ENCODE measurements at regions of chr4 and their contacts with region 1.

Region 1: GRCh38 chr4:112765317-112765975 is 128.5 kb downstream of the LARP7 start:
- DNase-seq: peak; percentile 26
- ATAC-seq: peak; percentile 61
- H3K4me3 ChIP-seq: no peak overlapping the region
- H3K27ac ChIP-seq: no peak overlapping the region
- H3K4me1 ChIP-seq: no peaks in the 10 kb centered on the region
- H3K27me3 ChIP-seq: no peaks in the 10 kb centered on the region
- CTCF ChIP-seq: peak; percentile 62

Region 2: DNA sequence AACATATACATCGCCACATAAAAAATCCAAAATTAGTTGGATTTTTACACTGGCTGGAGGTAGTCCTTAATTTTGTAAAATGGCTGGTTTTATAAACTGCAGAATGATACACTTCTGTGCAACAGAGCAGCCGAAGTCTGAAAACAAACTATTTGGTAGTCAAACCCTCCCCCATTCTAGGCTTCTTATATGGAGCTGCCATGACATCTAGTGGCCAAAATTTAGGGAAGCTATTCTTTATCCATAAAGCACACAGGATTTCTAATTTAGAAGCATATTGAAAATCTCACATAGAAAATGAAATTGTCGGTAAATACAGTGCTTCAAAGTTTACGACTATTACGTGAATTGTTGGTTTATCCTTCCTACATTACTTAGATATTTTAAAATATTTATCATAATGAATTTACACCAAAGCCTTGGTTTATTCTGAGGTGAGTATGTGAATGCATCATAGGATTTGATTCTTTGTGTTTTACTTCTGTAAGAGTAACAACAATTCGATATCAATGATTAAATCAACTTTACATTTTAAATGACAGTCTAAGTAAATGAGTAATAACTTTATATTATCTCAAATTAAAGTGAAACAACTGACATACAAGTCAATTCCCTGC is 733.6 kb before region 1 on chr4:
- CTCF ChIA-PET with region 1: no interaction called
- POLR2A ChIA-PET with region 1: no interaction called
- intact Hi-C with region 1: no loop called
- DNase-seq: peak; percentile 66
- ATAC-seq: peak; percentile 55; the same call in 1 of the 2 replicates
- H3K4me3 ChIP-seq: no peak overlapping the region
- H3K27ac ChIP-seq: no peak overlapping the region
- H3K4me1 ChIP-seq: no peaks in the 10 kb centered on the region
- H3K27me3 ChIP-seq: peaks cover 46% of the 10 kb centered on the region
- CTCF ChIP-seq: peak; percentile 76

Region 3: DNA sequence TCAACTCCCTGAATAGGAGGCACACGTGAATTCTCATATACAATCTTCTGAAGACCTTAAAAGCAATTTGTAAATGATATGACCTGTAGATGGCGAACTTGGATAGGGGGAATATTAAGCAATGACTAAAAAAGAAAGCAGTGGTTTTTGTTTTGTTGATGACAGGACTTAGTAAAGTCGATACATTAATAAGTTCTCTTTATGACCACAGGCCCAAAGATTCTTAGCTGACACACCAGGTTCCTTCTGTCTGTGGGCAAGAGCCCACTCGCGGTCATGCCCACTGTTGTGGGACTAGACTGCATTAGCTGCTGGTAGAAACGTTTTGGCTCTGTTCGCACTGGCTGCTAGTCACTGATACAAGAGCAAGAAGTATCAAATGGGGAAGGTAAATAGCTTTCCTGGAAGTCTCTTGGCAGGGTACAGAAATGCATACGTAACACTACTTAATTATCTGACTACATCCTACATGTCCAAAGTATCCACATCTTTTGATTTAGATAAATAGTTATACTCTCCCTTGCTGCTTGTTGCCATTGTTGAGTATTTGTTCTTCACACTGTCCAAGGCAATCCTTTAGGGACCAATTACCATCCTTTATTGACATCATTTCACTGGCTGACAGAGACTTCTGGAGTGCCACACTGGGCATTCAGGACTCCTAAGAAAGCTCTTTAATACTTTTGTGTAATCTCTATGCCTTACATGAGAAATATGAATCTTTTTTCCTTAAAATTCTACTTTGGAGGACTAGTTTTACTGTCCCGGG is 437.3 kb before region 1 on chr4:
- CTCF ChIA-PET with region 1: no interaction called
- POLR2A ChIA-PET with region 1: no interaction called
- intact Hi-C with region 1: loop called (anchors 5 kb)
- DNase-seq: peak; percentile 72
- ATAC-seq: peak; percentile 64
- H3K4me3 ChIP-seq: no peak overlapping the region
- H3K27ac ChIP-seq: no peak overlapping the region
- H3K4me1 ChIP-seq: no peaks in the 10 kb centered on the region
- H3K27me3 ChIP-seq: no peaks in the 10 kb centered on the region
- CTCF ChIP-seq: peak; percentile 66

Region 4: GRCh38 chr4:112560084-112560483 is 205.4 kb before region 1 on chr4:
- CTCF ChIA-PET with region 1: interaction called, 11 read pairs
- POLR2A ChIA-PET with region 1: no interaction called
- intact Hi-C with region 1: no loop called
- DNase-seq: no peak
- ATAC-seq: no peak
- H3K4me3 ChIP-seq: no peak overlapping the region
- H3K27ac ChIP-seq: no peak overlapping the region
- H3K4me1 ChIP-seq: peaks cover 6% of the 10 kb centered on the region; the same call in 1 of the 2 replicates
- H3K27me3 ChIP-seq: no peaks in the 10 kb centered on the region
- CTCF ChIP-seq: no peak

Region 5: GRCh38 chr4:112636688-112637551 is 128.5 kb before region 1 on chr4 and contains the starts of genes LARP7 and ZGRF1:
- CTCF ChIA-PET with region 1: interaction called, 3 read pairs
- POLR2A ChIA-PET with region 1: no interaction called
- intact Hi-C with region 1: loop called (anchors 1 kb)
- DNase-seq: peak; percentile 97
- ATAC-seq: peak; percentile 94
- H3K4me3 ChIP-seq: peak within 1 kb of the TSS; percentile 81
- H3K27ac ChIP-seq: peak within 1 kb of the TSS; percentile 80
- H3K4me1 ChIP-seq: no peaks in the 10 kb centered on the region
- H3K27me3 ChIP-seq: no peaks in the 10 kb centered on the region
- CTCF ChIP-seq: peak; percentile 74
- total RNA-seq, gene LARP7: 13.0 and 17.1 TPM in 2 replicates
- total RNA-seq, gene ZGRF1: 7.3 and 10.0 TPM in 2 replicates

Region 6: DNA sequence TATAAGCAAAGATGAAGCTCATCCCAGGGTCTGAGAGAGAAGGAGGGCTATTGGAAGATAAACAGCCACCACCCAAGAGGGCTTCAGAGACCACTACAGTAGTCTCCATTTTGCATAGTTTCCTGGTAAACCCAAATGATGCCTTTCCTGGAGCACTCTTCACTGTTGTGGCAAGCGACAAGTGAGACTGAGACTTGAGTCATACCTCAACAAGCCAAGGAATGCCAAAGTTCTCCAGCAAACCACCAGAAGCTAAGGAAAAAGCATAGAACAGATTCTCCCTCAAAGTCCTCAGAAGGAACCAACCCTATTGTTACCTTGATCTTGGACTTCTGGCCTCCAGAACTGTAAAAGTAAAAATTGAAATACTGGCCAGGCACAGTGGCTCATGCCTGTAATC is 62.6 kb before region 1 on chr4:
- CTCF ChIA-PET with region 1: no interaction called
- POLR2A ChIA-PET with region 1: no interaction called
- intact Hi-C with region 1: loop called (anchors 2 kb)
- DNase-seq: no peak
- ATAC-seq: no peak
- H3K4me3 ChIP-seq: no peak overlapping the region
- H3K27ac ChIP-seq: no peak overlapping the region
- H3K4me1 ChIP-seq: no peaks in the 10 kb centered on the region
- H3K27me3 ChIP-seq: peaks cover 27% of the 10 kb centered on the region
- CTCF ChIP-seq: no peak

Region 7: GRCh38 chr4:112938461-112939058 is 173.1 kb after region 1 on chr4:
- CTCF ChIA-PET with region 1: interaction called, 7 read pairs
- POLR2A ChIA-PET with region 1: no interaction called
- intact Hi-C with region 1: loop called (anchors 1 kb)
- DNase-seq: peak; percentile 60
- ATAC-seq: no peak
- H3K4me3 ChIP-seq: no peak overlapping the region
- H3K27ac ChIP-seq: no peak overlapping the region
- H3K4me1 ChIP-seq: no peaks in the 10 kb centered on the region
- H3K27me3 ChIP-seq: peaks cover 6% of the 10 kb centered on the region; the same call in 1 of the 2 replicates
- CTCF ChIP-seq: peak; percentile 80

Region 8: DNA sequence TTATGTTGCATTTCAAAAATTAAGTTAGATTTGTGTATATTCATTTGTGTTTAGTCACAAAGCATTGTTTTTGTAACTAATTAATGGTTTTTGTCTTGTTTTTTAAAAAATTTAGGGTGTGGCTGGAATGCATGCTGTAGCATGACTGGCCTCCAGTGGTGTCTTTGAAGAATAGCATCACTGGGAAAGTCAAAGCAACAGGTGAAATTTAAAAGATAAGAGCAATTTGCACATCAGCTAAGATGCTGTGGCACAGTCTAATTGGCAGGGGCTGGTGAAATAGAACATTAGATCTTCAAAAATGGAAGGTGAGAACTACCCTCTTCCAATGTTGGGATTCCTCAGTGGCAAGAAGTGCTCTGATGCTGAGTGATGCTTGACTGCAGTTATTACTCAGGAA is 329.4 kb after region 1 on chr4:
- CTCF ChIA-PET with region 1: no interaction called
- POLR2A ChIA-PET with region 1: no interaction called
- intact Hi-C with region 1: loop called (anchors 10 kb)
- DNase-seq: peak; percentile 30
- ATAC-seq: no peak
- H3K4me3 ChIP-seq: no peak overlapping the region
- H3K27ac ChIP-seq: no peak overlapping the region
- H3K4me1 ChIP-seq: no peaks in the 10 kb centered on the region
- H3K27me3 ChIP-seq: peaks cover 3% of the 10 kb centered on the region; the same call in 1 of the 2 replicates
- CTCF ChIP-seq: peak; percentile 83